Esophagus squamous epithelium (tissue), 5 donors: ENCODE measurements at regions of chr2 and their contacts with region 1.

Region 1: GRCh38 chr2:215269397-215270119 is 42.3 kb upstream of the ATIC start:
- DNase-seq: no peak
- H3K4me3 ChIP-seq: peak overlapping the region in 1 of 4 donors; percentile 3
- H3K27ac ChIP-seq: no peak overlapping the region
- H3K4me1 ChIP-seq: peaks cover 0 to 8% (median 0%) of the 10 kb centered on the region in 3 donors
- H3K27me3 ChIP-seq: no peaks in the 10 kb centered on the region
- CTCF ChIP-seq: peak; percentile 55 to 72 (median 70)
- POLR2A ChIP-seq: no peak

Region 2: GRCh38 chr2:214960677-214961076 is 308.9 kb before region 1 on chr2:
- intact Hi-C with region 1: loop called (anchors 10 kb)
- DNase-seq: no peak
- H3K4me3 ChIP-seq: no peak overlapping the region
- H3K27ac ChIP-seq: no peak overlapping the region
- H3K4me1 ChIP-seq: no peaks in the 10 kb centered on the region
- H3K27me3 ChIP-seq: no peaks in the 10 kb centered on the region
- CTCF ChIP-seq: peak in 2 of 6 experiments; percentile 45 to 50
- POLR2A ChIP-seq: no peak

Region 3: DNA sequence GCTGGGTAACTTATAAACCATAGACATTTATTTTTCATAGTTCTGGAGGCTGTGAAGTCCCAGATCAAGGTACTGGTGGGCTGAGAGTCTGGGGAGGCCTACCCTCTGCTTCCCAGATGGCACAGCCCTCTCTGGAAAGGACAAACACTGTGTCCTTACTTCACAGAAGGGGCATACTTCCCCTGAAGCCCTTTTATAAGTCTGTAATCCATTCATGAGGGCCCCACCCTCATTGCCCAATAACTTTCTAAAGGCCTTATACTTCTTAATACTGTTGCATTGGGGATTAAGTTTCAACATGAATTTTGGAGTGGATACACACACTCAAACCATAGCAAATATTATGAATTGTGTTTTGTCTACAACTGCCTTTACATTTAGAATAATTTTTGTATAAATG is 78.3 kb after region 1 on chr2:
- intact Hi-C with region 1: no loop called
- DNase-seq: no peak
- H3K4me3 ChIP-seq: no peak overlapping the region
- H3K27ac ChIP-seq: peak overlapping the region in 1 of 4 donors; percentile 17
- H3K4me1 ChIP-seq: peaks cover 0 to 6% (median 0%) of the 10 kb centered on the region in 3 donors
- H3K27me3 ChIP-seq: no peaks in the 10 kb centered on the region
- CTCF ChIP-seq: no peak
- POLR2A ChIP-seq: no peak